GM13977 (cell line): ENCODE measurements at regions of chr12 and their contacts with region 1.

Region 1: GRCh38 chr12:7695237-7696197 is at the start of gene GDF3:
- DNase-seq: no peak
- CTCF ChIP-seq: no peak

Region 2: GRCh38 chr12:7241404-7242005 is 454.0 kb before region 1 on chr12:
- in situ Hi-C with region 1: no loop called
- DNase-seq: no peak
- CTCF ChIP-seq: no peak

Region 3: GRCh38 chr12:7787574-7788300 is 92.2 kb after region 1 on chr12:
- in situ Hi-C with region 1: no loop called
- DNase-seq: no peak
- CTCF ChIP-seq: no peak

Region 4: DNA sequence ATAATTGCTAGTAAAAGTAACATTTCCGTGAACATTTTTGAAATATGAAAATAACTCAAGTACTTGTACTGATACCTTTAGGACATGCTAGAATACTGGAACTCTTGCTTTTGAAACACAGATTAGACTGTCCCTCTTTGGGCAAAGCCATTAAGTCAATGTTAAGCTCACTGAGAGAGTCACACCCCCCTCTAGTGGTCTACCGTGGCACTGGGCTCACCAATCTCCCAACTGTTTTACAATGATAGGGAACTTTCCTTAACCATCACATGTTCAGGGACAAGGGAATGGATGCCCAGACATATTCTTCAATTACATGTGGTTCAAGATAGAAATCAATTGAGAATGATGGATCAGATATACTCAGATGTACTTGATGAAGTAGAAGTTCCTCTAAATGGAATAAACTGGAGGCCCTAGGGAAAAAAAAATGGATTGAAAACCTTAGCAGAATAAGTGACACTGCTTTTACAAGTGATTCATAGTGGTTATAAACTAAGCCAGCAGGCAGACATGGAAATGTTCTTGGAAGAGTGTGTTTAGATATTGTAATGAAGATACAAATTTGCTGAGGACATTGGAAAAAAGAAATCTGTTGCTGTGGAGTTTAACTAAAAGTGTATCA is 111.5 kb after region 1 on chr12:
- in situ Hi-C with region 1: loop called (anchors 10 kb)
- DNase-seq: peak; percentile 73
- CTCF ChIP-seq: peak; percentile 91

Region 5: DNA sequence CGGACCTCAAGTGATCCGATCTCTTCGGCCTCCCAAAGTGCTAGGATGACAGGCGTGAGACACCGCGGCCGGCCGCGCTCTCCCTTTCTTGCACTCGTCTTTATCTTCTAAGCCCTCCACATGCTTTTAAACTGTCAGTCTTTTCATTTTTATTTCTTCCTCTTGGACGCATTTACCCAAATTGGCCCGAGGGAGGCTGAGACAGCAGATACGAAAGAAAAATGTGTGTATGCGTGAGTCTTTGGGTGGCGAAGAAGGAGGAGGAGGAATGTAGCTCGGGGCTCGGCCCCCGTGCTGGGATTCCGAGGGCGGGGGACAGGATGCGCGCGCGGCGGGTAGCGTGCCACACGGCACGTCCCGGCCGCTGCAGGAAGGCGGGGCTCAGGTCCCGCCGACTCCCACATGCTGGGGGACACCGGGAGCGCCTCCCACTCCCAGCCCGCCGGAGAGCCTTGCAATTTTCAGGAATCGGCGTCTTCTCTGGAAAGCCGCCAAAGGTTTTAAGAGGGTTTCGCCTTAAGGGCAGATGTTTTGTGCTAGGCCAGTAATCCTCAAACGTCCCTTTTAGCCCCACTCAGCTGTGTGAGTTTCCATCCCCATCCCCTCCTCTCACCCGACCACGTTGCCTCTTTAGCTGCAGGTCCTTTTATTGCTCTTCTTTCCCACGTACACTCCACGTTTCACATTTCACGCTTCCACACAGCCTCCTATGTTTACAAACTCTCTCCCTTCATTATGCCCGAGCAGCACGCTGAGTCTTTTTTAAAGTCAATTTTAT is 275.1 kb after region 1 on chr12:
- in situ Hi-C with region 1: no loop called
- DNase-seq: peak; percentile 77
- CTCF ChIP-seq: no peak